Right ventricle myocardium inferior (tissue), 1 donor: ENCODE measurements at regions of chr9 and their contacts with region 1.

Region 1: DNA sequence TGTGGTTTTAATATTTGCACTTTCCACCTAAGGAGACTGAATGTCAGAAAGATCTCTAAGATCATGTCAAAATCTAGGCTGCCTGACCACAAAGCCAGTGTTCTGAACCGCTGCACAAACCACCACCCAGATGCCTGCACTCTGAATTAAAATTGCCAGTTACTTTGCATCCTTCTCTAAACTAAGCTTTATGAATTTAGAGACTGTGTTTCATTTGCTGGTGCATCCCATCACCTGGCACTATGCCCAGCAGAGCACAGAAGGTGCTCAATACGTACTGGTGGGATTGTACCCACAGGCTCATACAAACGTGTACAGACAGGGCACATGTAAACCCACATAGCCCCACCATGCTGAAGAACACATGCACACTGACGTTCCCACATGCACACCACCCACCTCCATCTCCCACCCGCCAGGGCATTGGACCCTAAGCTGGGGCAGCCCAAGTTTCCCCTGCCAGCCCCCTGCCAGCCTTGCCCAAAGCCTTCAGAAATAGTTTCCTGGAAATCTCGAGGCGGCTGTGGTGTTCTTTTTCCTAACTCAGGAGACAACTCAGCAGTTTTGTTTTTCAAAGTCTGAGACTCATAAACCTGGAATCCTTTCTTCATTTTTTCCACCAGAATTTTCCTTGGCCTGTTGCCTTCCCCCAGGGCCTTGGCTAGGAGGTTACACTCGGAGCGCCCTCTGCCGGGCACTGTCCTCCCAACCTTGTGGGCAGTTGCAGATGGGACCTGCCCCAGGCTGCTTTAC is 9.6 kb upstream of the TRAF1 start:
- DNase-seq: peak; percentile 96
- ATAC-seq: peak; percentile 79

Region 2: GRCh38 chr9:120619751-120620655 is 316.2 kb before region 1 on chr9:
- intact Hi-C with region 1: loop called (anchors 5 kb)
- DNase-seq: no peak
- ATAC-seq: peak; percentile 84

Region 3: GRCh38 chr9:120755827-120756434 is 180.3 kb before region 1 on chr9:
- intact Hi-C with region 1: loop called (anchors 1 kb)
- DNase-seq: no peak
- ATAC-seq: peak; percentile 42

Region 4: GRCh38 chr9:120842690-120843499 is 93.3 kb before region 1 on chr9 and contains the start of gene PSMD5:
- intact Hi-C with region 1: loop called (anchors 2 kb)
- DNase-seq: peak; percentile 99
- ATAC-seq: peak; percentile 99
- total RNA-seq, gene PSMD5: 15.3 TPM

Region 5: GRCh38 chr9:120856700-120857099 is 79.5 kb before region 1 on chr9:
- intact Hi-C with region 1: no loop called
- DNase-seq: no peak
- ATAC-seq: no peak

Region 6: GRCh38 chr9:120868676-120869359 is 67.4 kb before region 1 on chr9:
- intact Hi-C with region 1: loop called (anchors 2 kb)
- DNase-seq: peak; percentile 98
- ATAC-seq: peak; percentile 95

Region 7: GRCh38 chr9:120950421-120951388 is 14.5 kb after region 1 on chr9:
- intact Hi-C with region 1: no loop called
- DNase-seq: no peak
- ATAC-seq: no peak

Region 8: DNA sequence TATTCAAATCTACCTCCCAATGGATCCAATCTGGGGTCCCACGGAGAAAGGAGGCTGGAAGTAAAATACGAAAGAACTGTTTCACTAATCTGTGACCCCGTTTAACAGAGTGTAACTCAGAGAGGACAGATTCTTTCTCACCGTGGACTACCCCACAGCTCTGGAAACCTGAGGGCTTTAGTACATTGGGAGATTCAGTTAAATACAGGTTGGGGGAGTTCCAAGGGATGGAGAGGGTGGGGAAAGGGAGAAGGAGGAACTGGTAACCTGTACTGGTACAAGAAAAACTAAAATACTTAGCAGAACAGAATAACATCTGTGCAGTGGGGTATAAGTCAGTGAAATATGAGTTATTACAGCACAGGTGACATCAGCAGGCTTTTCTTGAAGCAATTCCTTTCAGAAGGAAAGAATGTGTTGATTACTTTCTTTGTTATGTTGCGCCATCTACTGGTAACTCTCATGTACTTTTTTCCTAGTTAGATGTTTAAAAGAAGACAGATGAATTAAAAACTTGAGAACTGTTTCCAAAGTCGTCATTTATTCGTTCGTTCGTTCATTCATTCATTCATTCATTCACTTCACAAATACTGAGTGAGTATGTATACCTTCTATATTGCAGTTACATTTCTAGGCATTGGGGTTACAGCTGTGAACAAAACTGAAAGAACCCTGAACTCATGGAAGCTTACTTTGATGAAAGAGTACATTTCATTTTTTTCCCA is 463.9 kb after region 1 on chr9:
- intact Hi-C with region 1: no loop called
- DNase-seq: no peak
- ATAC-seq: no peak